ENCODE measurements at regions of chr6 and their contacts with region 1.

Region 1: GRCh38 chr6:129598244-129599187 is 111.5 kb downstream of the ARHGAP18 start:
- DNase-seq: peak in 2 of 5 donors; percentile 60 to 65
- H3K4me3 ChIP-seq: no peak overlapping the region
- H3K4me3 Mint-ChIP-seq: peak overlapping the region in 1 of 7 donors; percentile 29
- H3K27ac ChIP-seq: no peak overlapping the region
- H3K27ac Mint-ChIP-seq: no peak overlapping the region
- H3K4me1 ChIP-seq: no peaks in the 10 kb centered on the region
- H3K4me1 Mint-ChIP-seq: no peaks in the 10 kb centered on the region
- H3K27me3 ChIP-seq: no peaks in the 10 kb centered on the region
- H3K27me3 Mint-ChIP-seq: no peaks in the 10 kb centered on the region

Region 2: GRCh38 chr6:129632172-129632613 is 33.7 kb after region 1 on chr6:
- CTCF ChIA-PET with region 1: no interaction called
- POLR2A ChIA-PET with region 1: no interaction called
- DNase-seq: no peak
- H3K4me3 ChIP-seq: no peak overlapping the region
- H3K4me3 Mint-ChIP-seq: no peak overlapping the region
- H3K27ac ChIP-seq: no peak overlapping the region
- H3K27ac Mint-ChIP-seq: peak overlapping the region in 1 of 8 donors; percentile 15
- H3K4me1 ChIP-seq: no peaks in the 10 kb centered on the region
- H3K4me1 Mint-ChIP-seq: peaks cover 2 to 7% (median 3%) of the 10 kb centered on the region in 3 donors
- H3K27me3 ChIP-seq: no peaks in the 10 kb centered on the region
- H3K27me3 Mint-ChIP-seq: peaks cover 0 to 1% of the 10 kb centered on the region in 2 donors

Region 3: GRCh38 chr6:129730477-129731165 is 132.1 kb after region 1 on chr6:
- CTCF ChIA-PET with region 1: interaction called, 88 read pairs
- POLR2A ChIA-PET with region 1: no interaction called
- DNase-seq: peak in 3 of 5 donors; percentile 37 to 50 (median 41)
- H3K4me3 ChIP-seq: no peak overlapping the region
- H3K4me3 Mint-ChIP-seq: no peak overlapping the region
- H3K27ac ChIP-seq: no peak overlapping the region
- H3K27ac Mint-ChIP-seq: peak overlapping the region in 2 of 8 donors; percentile 33 to 37
- H3K4me1 ChIP-seq: no peaks in the 10 kb centered on the region
- H3K4me1 Mint-ChIP-seq: peaks cover 14 to 22% (median 16%) of the 10 kb centered on the region in 3 donors
- H3K27me3 ChIP-seq: no peaks in the 10 kb centered on the region
- H3K27me3 Mint-ChIP-seq: no peaks in the 10 kb centered on the region

Region 4: GRCh38 chr6:129748212-129748900 is 149.8 kb after region 1 on chr6:
- CTCF ChIA-PET with region 1: interaction called, 20 read pairs
- POLR2A ChIA-PET with region 1: no interaction called
- DNase-seq: peak; percentile 31 to 64 (median 51)
- H3K4me3 ChIP-seq: peak overlapping the region; percentile 43
- H3K4me3 Mint-ChIP-seq: peak overlapping the region; percentile 68 to 90 (median 78)
- H3K27ac ChIP-seq: peak overlapping the region; percentile 12
- H3K27ac Mint-ChIP-seq: peak overlapping the region; percentile 80 to 98 (median 91)
- H3K4me1 ChIP-seq: peaks cover 53% of the 10 kb centered on the region
- H3K4me1 Mint-ChIP-seq: peaks cover 50 to 74% (median 61%) of the 10 kb centered on the region in 3 donors
- H3K27me3 ChIP-seq: no peaks in the 10 kb centered on the region
- H3K27me3 Mint-ChIP-seq: no peaks in the 10 kb centered on the region

Region 5: DNA sequence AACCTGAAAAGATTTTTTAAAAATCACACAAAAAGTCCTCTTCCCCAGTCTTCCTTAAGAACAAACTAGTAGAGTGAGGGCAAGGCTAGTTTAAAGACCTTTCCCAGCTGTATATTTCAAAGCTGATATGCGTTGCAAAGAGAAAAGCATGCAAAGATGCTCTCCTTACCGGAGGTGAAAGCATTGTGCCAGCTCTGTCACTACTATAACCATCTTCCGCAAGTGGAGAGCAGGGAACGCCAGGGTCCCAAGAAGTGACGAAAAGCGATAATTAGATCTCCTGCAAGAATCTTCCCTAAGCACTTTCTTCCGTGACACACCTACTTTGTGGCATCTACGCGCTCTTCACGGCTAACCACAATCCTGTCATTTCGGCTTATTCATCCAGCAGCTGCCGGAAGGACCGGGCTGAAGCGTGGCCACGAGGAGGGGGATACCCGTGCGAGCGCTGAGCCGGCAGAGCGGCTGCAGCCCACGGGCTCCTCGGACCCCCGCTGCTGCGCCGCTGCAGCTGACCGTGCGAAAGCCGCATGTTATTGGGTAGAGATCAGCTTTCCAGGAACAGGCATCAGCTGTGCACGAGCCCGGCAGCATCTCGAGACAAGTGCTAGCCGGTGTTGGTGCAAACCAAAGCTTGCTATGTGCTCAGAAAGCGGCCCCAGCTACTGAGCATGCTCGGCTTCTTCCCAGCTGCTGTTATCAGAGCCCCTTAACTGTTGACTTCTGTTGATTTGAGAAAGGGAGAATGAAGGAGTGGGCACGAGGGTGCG is 168.6 kb after region 1 on chr6:
- CTCF ChIA-PET with region 1: interaction called, 11 read pairs
- POLR2A ChIA-PET with region 1: no interaction called
- DNase-seq: peak; percentile 19 to 65 (median 49)
- H3K4me3 ChIP-seq: peak overlapping the region; percentile 73
- H3K4me3 Mint-ChIP-seq: peak overlapping the region; percentile 75 to 88 (median 80)
- H3K27ac ChIP-seq: no peak overlapping the region
- H3K27ac Mint-ChIP-seq: peak overlapping the region in 3 of 8 donors; percentile 0 to 26 (median 25)
- H3K4me1 ChIP-seq: peaks cover 10% of the 10 kb centered on the region
- H3K4me1 Mint-ChIP-seq: peaks cover 7 to 17% (median 13%) of the 10 kb centered on the region in 3 donors
- H3K27me3 ChIP-seq: peaks cover 3% of the 10 kb centered on the region
- H3K27me3 Mint-ChIP-seq: peaks cover 9 to 43% of the 10 kb centered on the region in 2 donors

Region 6: GRCh38 chr6:130020907-130021629 is 422.6 kb after region 1 on chr6:
- CTCF ChIA-PET with region 1: interaction called, 15 read pairs
- POLR2A ChIA-PET with region 1: no interaction called
- DNase-seq: peak; percentile 51 to 85 (median 77)
- H3K4me3 ChIP-seq: peak overlapping the region; percentile 59
- H3K4me3 Mint-ChIP-seq: peak overlapping the region; percentile 98 to 100 (median 99)
- H3K27ac ChIP-seq: peak overlapping the region; percentile 48
- H3K27ac Mint-ChIP-seq: peak overlapping the region; percentile 93 to 99 (median 96)
- H3K4me1 ChIP-seq: peaks cover 8% of the 10 kb centered on the region
- H3K4me1 Mint-ChIP-seq: peaks cover 32 to 48% (median 47%) of the 10 kb centered on the region in 3 donors
- H3K27me3 ChIP-seq: no peaks in the 10 kb centered on the region
- H3K27me3 Mint-ChIP-seq: peaks cover 0 to 2% of the 10 kb centered on the region in 2 donors

Measured in CD8-positive, alpha-beta memory T cell (primary cell).